ENCODE measurements at regions of chr2 and their contacts with region 1.

Region 1: DNA sequence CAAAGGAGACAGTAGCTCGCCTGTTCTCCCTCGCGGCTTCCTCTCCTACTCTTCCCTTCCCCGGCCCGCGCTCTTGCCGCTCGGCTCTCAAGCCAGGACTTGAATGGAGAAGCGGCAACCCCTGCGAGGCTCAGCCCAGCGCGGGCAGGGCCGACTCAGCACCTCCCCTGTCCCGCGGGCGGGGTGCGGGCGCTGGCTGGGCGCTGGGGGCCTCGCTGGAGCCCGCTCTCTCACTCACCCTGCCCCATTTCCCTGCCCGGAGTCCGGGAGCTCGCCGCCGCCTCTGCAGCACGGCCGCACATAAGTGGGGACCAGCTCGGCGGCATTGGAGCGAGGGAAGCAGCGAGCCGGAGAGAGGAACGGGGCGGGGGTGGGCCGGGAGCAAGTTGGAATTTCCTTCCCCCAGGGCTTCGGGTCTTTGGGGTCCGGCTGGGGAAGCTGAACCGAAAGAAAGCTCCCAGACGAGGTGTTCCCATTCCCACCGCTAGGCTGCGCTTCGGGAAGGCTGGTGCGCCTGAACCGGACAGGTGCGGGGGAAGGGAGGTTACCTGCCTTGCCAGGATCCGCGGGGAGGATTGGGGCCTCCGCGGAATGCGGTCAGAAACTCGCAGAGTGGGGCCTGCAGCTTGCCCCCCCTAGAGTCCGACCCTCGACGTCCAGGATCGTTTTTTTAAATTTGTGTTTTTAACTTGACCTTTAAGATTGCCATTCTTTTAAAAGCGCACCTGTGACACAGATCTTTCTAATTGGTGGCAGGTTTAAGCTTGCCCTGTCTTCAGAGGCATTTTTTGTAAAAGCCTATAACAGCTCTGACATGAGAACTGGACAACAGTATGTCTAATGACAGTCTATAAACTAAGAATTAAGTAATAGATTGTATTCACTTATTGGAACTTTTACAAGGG is at the start of gene COBLL1:
- DNase-seq: peak; percentile 93
- total RNA-seq, gene COBLL1: 76.9 to 92.6 TPM

Region 2: DNA sequence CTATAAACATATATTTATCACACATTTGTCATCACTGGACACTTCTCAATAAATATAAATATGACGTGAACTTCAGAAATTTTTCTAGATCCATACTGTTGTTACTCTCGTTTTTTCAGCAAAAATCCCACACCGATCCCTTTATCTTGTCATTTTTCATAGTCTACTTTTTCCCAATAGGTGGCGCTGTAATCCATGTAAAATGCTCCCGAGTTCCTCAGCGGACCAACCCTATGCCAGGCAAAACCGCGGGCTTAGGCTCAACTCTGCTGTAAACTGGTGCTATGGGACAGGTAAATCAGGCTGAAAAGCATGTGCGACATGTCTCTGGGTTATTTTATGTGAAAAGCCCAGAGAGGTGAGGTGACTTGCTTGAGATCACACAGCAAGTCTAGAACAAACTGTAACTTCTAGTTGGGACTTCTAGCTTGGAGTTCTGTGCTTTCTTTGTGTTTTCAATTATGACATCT is 104.3 kb before region 1 on chr2:
- intact Hi-C with region 1: loop called in 1 of 2 experiments (anchors 5 kb)
- DNase-seq: peak; percentile 79

Region 3: DNA sequence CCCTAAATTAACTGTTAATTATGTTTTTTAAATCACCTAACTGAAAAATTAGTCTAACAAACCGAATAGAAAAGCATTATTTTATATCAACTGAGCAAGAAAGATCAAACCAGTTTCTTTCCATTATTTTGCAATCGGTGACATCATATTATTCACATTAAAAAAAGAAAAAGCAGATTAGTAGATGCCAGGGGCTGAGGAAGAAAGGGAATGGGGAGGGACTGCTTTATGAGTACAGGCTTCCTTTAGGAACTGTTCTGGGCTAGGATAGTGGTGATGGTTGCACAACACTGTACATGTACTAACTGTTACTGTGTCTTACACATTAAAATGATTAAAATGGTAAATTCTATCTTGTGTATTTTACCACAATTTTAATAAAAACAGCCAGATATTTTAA is 59.6 kb before region 1 on chr2:
- intact Hi-C with region 1: loop called in 1 of 2 experiments (anchors 10 kb)
- DNase-seq: no peak

Region 4: GRCh38 chr2:164808776-164809175 is 33.2 kb before region 1 on chr2:
- intact Hi-C with region 1: no loop called
- DNase-seq: no peak

Region 5: GRCh38 chr2:164826293-164827243 is 15.4 kb before region 1 on chr2:
- intact Hi-C with region 1: no loop called
- DNase-seq: peak; percentile 58

Region 6: DNA sequence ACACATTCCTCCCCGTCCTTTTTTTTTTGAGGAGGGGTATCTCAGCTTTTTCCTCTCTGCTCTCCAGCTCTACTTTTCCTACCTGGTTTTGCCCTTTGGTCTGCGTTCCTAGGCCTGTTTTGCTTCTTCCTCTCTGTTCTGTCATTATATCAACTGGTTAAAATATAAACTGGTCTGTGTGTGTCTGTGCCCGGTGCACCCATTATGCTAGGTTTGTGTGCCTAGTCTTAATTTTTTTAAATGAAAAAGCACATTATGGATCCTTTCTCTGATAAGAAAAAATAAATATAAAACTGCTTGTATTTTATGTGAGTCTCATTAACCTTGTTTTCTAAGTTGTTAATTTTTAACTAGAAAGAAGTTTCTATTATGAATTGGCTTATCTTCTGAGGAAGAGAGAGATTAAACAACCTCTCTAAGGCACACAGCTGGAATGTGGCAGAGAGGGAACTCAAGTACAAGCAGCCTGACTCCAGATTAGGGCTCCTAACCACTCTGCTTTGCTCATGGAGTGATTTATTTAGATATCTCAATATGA is 96.0 kb after region 1 on chr2:
- intact Hi-C with region 1: no loop called
- DNase-seq: no peak

Region 7: DNA sequence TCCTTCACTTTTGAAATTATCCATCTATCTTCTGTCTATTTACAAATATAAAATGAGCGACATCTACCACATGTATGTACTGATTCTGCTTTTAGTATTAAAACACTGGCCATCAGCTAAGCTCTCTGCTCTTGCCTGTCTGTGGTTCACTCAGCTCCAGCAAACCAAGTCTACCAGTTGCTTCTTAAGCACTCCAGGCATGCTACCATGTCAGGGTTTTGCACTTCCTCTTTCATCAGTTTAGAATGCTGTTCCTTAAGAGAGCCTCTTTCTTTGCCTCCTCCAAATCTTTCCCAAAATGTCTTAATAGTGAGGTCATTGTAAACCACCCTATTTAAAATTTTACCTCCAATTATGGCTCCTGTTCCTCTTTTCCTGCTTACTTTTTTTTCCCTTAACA is 302.3 kb after region 1 on chr2:
- intact Hi-C with region 1: no loop called
- DNase-seq: no peak